ENCODE measurements at regions of chr6 and their contacts with region 1.

Region 1: DNA sequence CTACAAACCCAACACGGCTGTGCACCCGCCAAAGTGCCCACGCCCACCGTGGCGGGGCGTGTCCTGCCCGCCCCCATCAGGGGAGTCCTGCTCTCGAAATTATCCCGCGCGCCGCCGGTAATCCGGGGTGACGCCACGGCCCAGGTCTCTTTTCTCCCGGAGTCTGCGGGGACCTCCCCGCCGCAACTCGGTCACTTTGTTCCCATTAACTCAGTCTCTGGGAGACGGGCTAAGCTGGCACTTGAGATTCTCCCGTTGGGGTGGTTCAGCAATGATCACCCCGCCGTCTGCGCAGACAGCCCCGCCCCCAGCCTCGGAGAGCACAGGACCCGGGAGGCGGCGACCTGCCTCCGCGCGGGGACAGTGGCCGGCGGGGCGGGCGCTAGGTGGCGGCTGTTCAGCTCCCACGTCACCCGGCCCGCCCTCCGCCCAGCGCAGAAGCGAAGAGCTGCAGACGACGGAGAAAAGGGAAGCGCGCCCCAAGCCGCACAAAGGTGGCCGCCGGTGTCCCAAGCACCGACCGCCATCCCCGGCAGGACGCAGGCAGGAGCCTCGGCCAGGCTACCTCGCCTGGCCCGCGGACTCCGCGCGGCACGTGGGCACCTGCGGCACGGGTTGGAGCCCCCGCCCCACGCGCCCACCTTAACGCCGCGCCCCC is 31.5 kb downstream of the SF3B5 start:
- DNase-seq: peak; percentile 93
- ATAC-seq: peak; percentile 90
- H3K4me3 Mint-ChIP-seq: peak overlapping the region; percentile 81
- H3K27ac Mint-ChIP-seq: peak overlapping the region; percentile 80
- H3K4me1 Mint-ChIP-seq: peaks cover 46% of the 10 kb centered on the region
- H3K27me3 Mint-ChIP-seq: peaks cover 11% of the 10 kb centered on the region

Region 2: DNA sequence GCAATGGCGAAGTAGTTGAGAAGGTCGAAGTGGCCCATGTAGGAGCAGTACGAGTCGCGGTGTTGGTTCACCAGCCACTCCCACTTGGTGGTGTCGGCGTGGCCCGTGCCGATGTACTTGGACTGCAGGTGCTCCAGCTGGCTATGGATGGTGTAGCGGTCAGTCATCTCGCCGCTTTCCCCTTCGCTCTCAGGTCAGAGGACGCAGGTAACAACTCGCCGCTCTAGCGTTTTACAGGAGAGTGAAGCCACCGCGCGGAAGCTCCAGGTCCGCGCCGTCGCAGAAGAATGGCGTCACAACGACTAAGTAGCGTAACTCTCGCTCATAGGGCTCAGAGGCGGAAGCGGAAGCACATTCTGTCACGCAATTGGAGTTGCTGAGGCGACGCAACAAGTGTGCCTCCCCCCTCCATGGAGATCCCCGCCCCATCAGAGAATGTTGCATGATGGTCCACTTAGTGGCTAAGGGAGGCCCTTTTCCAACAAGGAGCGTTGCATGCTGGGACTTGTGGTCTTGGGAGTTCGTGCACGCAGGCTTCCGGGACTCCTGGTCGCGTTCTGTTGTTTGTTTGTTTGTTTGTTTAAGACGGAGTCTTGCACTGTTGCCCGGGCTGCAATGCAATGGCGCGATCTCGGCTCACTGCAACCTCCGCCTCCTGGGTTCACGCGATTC is 31.6 kb after region 1 on chr6 and contains the start of gene SF3B5:
- CTCF ChIA-PET with region 1: interaction called, 3 read pairs
- POLR2A ChIA-PET with region 1: interaction called, 10 read pairs
- intact Hi-C with region 1: loop called (anchors 1 kb)
- DNase-seq: peak; percentile 98
- ATAC-seq: peak; percentile 97
- H3K4me3 Mint-ChIP-seq: peak within 1 kb of the TSS; percentile 84
- H3K27ac Mint-ChIP-seq: peak within 1 kb of the TSS; percentile 91
- H3K4me1 Mint-ChIP-seq: peaks cover 22% of the 10 kb centered on the region
- H3K27me3 Mint-ChIP-seq: no peaks in the 10 kb centered on the region
- total RNA-seq, gene SF3B5: 152 to 164 TPM